H1 (cell line): ENCODE measurements at regions of chr19 and their contacts with region 1.

Region 1: GRCh38 chr19:51460164-51460992 is 2.1 kb upstream of the SIGLEC8 start:
- DNase-seq: no peak
- H3K4me3 ChIP-seq: peak overlapping the region in 3 of 4 experiments; percentile 2 to 47 (median 40); a peak in 2 of 8 replicates
- H3K27ac ChIP-seq: no peak overlapping the region
- H3K4me1 ChIP-seq: peaks cover 0 to 3% (median 0%) of the 10 kb centered on the region in 4 experiments; a peak in 1 of 7 replicates
- H3K27me3 ChIP-seq: no peaks in the 10 kb centered on the region
- CTCF ChIP-seq: no peak
- EP300 ChIP-seq: no peak
- POLR2A ChIP-seq: no peak
- RAD21 ChIP-seq: no peak

Region 2: GRCh38 chr19:51431124-51431523 is 29.3 kb before region 1 on chr19:
- CTCF ChIA-PET with region 1: no interaction called
- POLR2A ChIA-PET with region 1: no interaction called
- DNase-seq: no peak
- H3K4me3 ChIP-seq: no peak overlapping the region
- H3K27ac ChIP-seq: no peak overlapping the region
- H3K4me1 ChIP-seq: no peaks in the 10 kb centered on the region
- H3K27me3 ChIP-seq: no peaks in the 10 kb centered on the region; a peak in 1 of 7 replicates
- CTCF ChIP-seq: no peak
- EP300 ChIP-seq: no peak
- POLR2A ChIP-seq: no peak
- RAD21 ChIP-seq: no peak

Region 3: DNA sequence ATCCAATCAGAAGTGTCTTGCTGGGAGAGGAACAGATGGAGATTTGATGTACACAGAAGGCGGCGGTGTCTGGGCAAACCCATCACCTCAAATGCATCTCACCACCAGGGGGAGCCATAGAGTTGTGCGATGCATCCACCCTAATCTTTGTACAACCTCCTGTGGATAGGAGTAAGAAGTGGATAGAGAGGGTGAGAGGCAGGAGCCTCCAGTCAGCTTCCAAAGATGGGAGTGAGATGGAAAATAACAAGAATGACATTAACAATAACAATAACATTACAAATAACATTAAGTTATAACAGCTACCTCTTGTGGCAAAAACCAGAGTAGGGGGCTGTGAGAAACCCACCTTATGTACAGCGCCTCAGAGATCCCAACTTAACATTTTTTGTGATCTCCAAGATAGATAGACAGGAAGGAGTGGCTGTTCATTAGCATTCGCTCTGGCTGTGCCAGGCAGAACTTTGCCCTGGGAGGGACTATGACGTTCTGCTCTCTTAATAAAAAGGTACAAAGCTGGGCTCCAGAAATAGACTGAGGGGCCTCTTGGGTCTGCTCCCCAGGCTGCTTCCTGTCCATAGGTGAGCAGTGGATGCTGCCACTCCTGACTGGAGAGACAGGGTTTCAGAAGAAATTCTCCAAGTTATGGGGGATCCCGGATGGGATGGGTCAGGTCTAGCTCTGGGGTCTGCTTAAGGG is 12.8 kb after region 1 on chr19:
- CTCF ChIA-PET with region 1: interaction called, 22 read pairs
- POLR2A ChIA-PET with region 1: no interaction called
- DNase-seq: peak; percentile 17 to 86
- H3K4me3 ChIP-seq: no peak overlapping the region
- H3K27ac ChIP-seq: no peak overlapping the region
- H3K4me1 ChIP-seq: no peaks in the 10 kb centered on the region
- H3K27me3 ChIP-seq: no peaks in the 10 kb centered on the region; a peak in 1 of 7 replicates
- CTCF ChIP-seq: peak; percentile 76 to 81 (median 78)
- EP300 ChIP-seq: no peak
- POLR2A ChIP-seq: no peak
- RAD21 ChIP-seq: peak; percentile 78